ENCODE measurements at regions of chr3 and their contacts with region 1.

Region 1: GRCh38 chr3:48776854-48777253 is 59.8 kb upstream of the IP6K2 start:
- DNase-seq: no peak
- H3K4me3 ChIP-seq: no peak overlapping the region
- H3K27ac ChIP-seq: no peak overlapping the region
- H3K4me1 ChIP-seq: no peaks in the 10 kb centered on the region
- H3K27me3 ChIP-seq: no peaks in the 10 kb centered on the region
- CTCF ChIP-seq: no peak
- EP300 ChIP-seq: no peak
- POLR2A ChIP-seq: no peak

Region 2: GRCh38 chr3:47731061-47731460 is 1045.8 kb before region 1 on chr3:
- intact Hi-C with region 1: loop called (anchors 10 kb)
- DNase-seq: no peak
- H3K4me3 ChIP-seq: no peak overlapping the region
- H3K27ac ChIP-seq: no peak overlapping the region
- H3K4me1 ChIP-seq: no peaks in the 10 kb centered on the region
- H3K27me3 ChIP-seq: no peaks in the 10 kb centered on the region
- CTCF ChIP-seq: no peak
- EP300 ChIP-seq: no peak
- POLR2A ChIP-seq: no peak

Region 3: GRCh38 chr3:48548729-48549705 is 227.8 kb before region 1 on chr3:
- intact Hi-C with region 1: no loop called
- DNase-seq: peak; percentile 95
- H3K4me3 ChIP-seq: no peak overlapping the region
- H3K27ac ChIP-seq: peak overlapping the region in 1 of 4 donors; percentile 23
- H3K4me1 ChIP-seq: peaks cover 0 to 6% (median 2%) of the 10 kb centered on the region in 4 donors
- H3K27me3 ChIP-seq: no peaks in the 10 kb centered on the region
- CTCF ChIP-seq: peak; percentile 96 to 99 (median 97)
- EP300 ChIP-seq: no peak
- POLR2A ChIP-seq: no peak

Region 4: DNA sequence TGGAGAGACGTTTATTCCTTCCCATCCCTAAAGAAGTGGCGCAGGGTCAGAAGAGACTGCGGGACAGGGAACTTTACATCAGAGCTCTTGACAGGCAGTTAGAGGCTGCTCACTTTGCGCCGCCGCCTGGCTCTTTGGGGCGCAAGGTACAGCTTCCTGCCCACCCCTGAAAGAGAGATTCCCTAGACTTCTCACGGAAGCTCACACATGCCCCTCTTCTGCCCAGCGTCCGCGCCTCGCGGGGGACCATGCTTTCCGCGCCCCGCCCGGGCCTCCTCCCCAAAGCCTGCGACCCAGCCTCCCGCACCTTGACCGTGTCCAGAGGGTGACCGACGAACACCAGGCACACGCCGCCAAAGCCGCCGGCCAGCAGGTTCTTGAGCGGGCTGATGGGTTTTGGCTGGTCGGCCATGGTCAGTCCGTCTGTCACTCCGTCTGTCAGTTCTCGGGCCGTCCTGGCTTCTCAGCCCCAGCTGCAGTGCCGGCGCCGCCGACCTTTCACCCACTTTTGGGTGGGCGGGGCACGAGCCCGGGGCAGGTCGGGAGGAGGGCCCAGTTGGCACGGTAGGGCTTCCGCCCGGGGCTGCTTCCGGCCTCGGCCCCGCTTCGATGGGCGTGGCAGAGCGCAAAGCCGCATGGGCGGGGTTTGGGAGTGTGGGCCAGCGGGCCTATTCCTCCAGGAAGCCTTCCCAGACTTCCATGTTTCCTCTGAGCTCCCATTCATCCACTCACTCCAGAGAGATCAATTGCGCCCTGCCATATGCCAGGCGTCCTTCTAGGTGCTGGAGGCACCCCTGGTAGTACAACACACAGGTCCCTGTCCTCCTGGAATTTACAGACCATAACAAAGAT is 121.8 kb after region 1 on chr3 and contains the start of gene SLC25A20:
- intact Hi-C with region 1: no loop called
- DNase-seq: peak; percentile 95
- H3K4me3 ChIP-seq: peak within 1 kb of the TSS; percentile 74 to 95 (median 84)
- H3K27ac ChIP-seq: peak within 1 kb of the TSS; percentile 66 to 92 (median 84)
- H3K4me1 ChIP-seq: peaks cover 13 to 25% (median 19%) of the 10 kb centered on the region in 4 donors
- H3K27me3 ChIP-seq: no peaks in the 10 kb centered on the region
- CTCF ChIP-seq: peak in 1 of 3 experiments; percentile 3
- EP300 ChIP-seq: no peak
- POLR2A ChIP-seq: no peak
- total RNA-seq, gene SLC25A20: 13.3 to 34.6 (median 21.8) TPM